Activated T-helper 2 cell treated with anti-CD3 and anti-CD28 coated beads, Interferon-gamma antibody, Interleukin-2, Interleukin-4, amounts not matched to agents 10 μg/mL and 5 μg/mL and 100 μg/mL, durations not matched to agents 14 hours and 24 hours and 36 hours (primary cell): ENCODE measurements at regions of chr20 and their contacts with region 1.

Region 1: GRCh38 chr20:25057234-25058050 is 497 bp downstream of the ACSS1 start:
- DNase-seq: peak; percentile 78
- H3K4me3 Mint-ChIP-seq: peak overlapping the region; percentile 76
- H3K27ac Mint-ChIP-seq: peak overlapping the region; percentile 64
- H3K4me1 Mint-ChIP-seq: peaks cover 30% of the 10 kb centered on the region
- H3K27me3 Mint-ChIP-seq: peaks cover 18% of the 10 kb centered on the region

Region 2: GRCh38 chr20:24027229-24027628 is 1030.2 kb before region 1 on chr20:
- intact Hi-C with region 1: loop called (anchors 5 kb)
- DNase-seq: peak; percentile 74
- H3K4me3 Mint-ChIP-seq: peak overlapping the region; percentile 2
- H3K27ac Mint-ChIP-seq: peak overlapping the region; percentile 84
- H3K4me1 Mint-ChIP-seq: peaks cover 44% of the 10 kb centered on the region
- H3K27me3 Mint-ChIP-seq: no peaks in the 10 kb centered on the region

Region 3: GRCh38 chr20:24948939-24949679 is 108.3 kb before region 1 on chr20 and contains the start of gene CST7:
- intact Hi-C with region 1: loop called (anchors 5 kb)
- DNase-seq: peak; percentile 83
- H3K4me3 Mint-ChIP-seq: peak within 1 kb of the TSS; percentile 94
- H3K27ac Mint-ChIP-seq: peak within 1 kb of the TSS; percentile 96
- H3K4me1 Mint-ChIP-seq: peaks cover 57% of the 10 kb centered on the region
- H3K27me3 Mint-ChIP-seq: no peaks in the 10 kb centered on the region
- total RNA-seq, gene CST7: 115 and 121 TPM in 2 replicates

Region 4: GRCh38 chr20:25022687-25023086 is 34.8 kb before region 1 on chr20:
- intact Hi-C with region 1: no loop called
- DNase-seq: no peak
- H3K4me3 Mint-ChIP-seq: no peak overlapping the region
- H3K27ac Mint-ChIP-seq: no peak overlapping the region
- H3K4me1 Mint-ChIP-seq: no peaks in the 10 kb centered on the region
- H3K27me3 Mint-ChIP-seq: no peaks in the 10 kb centered on the region

Region 5: DNA sequence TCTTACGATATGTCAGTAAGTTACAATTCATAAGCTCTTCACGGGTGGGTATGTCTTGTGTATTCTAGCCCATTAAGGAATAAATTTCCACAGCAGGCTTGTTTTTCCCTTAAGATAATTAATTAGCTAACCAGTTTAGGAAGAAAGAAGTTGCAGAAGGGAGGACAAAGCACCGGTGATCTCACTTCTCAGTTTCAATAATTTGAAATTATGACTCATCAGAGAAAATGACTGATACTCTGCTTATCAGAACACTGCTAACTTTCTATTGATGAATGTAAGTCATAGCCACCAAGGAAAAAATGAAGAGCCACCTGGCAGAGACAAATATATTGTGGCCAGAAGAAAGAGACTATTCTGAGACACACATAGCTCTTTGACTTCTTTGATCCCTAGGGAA is 103.0 kb after region 1 on chr20:
- intact Hi-C with region 1: loop called (anchors 5 kb)
- DNase-seq: no peak
- H3K4me3 Mint-ChIP-seq: peak overlapping the region; percentile 11
- H3K27ac Mint-ChIP-seq: peak overlapping the region; percentile 58
- H3K4me1 Mint-ChIP-seq: peaks cover 33% of the 10 kb centered on the region
- H3K27me3 Mint-ChIP-seq: peaks cover 2% of the 10 kb centered on the region

Region 6: GRCh38 chr20:25310268-25310920 is 253.0 kb after region 1 on chr20:
- intact Hi-C with region 1: loop called (anchors 2 kb)
- DNase-seq: peak; percentile 59
- H3K4me3 Mint-ChIP-seq: peak overlapping the region; percentile 74
- H3K27ac Mint-ChIP-seq: peak overlapping the region; percentile 95
- H3K4me1 Mint-ChIP-seq: peaks cover 36% of the 10 kb centered on the region
- H3K27me3 Mint-ChIP-seq: no peaks in the 10 kb centered on the region